GM13977 (cell line): ENCODE measurements at regions of chr1 and their contacts with region 1.

Region 1: GRCh38 chr1:23188434-23188884 is 19.8 kb upstream of the LUZP1 start:
- DNase-seq: no peak
- CTCF ChIP-seq: no peak

Region 2: GRCh38 chr1:22976461-22977243 is 211.8 kb before region 1 on chr1:
- in situ Hi-C with region 1: loop called (anchors 5 kb)
- DNase-seq: peak; percentile 76
- CTCF ChIP-seq: peak; percentile 94

Region 3: DNA sequence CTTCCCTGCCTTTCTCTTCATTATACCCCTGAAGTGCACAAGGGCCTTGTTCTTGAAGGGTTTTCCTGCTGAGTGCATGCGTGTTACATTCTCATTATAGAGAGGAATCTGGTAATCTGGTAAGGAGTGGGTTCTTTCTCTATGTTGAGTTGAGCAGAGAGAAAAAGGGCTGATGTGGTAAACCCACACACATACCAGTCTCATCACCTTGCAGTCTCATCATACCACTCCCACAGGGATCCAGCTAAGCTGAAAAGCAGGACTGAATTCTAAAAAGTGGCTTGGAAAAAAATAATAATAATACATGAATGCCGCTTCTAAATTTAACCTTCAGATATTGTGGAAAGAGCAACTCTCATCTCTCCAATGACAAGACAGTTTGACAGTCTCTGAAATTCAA is 39.3 kb after region 1 on chr1:
- in situ Hi-C with region 1: no loop called
- DNase-seq: no peak
- CTCF ChIP-seq: no peak